Lower leg skin (tissue), 4 donors: ENCODE measurements at regions of chr4 and their contacts with region 1.

Region 1: GRCh38 chr4:165464813-165465381 is 86.1 kb downstream of the CPE start:
- DNase-seq: no peak
- H3K4me3 ChIP-seq: no peak overlapping the region
- CTCF ChIP-seq: peak in 2 of 3 donors; percentile 29 to 57
- POLR2A ChIP-seq: no peak

Region 2: DNA sequence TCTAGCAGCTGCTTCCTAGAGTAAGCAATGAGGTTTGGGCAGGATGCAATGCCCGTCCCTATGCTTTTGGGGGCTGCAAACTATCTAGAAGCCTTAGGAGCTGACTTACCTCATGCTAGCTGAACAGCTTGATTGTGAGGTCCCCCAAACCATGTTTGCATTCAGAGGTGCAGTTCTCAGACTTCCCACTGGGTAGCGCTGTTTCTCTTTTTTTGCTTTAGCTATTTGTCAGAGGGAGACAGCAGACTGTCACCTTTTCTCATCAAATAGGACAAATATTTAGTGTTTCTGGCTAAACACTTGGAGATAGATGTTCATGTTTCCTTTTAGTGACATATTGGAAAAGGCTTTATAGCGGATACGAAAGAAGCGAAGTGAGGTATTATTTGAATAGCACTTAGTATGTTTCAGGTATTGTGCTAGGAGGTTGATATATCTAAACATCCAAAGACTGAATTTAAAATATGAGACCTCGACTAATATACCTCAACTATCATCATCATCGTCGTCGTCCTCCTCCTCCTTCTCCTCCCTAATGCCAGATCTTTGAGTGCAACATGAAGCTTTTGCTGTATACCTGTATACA is 333.6 kb before region 1 on chr4:
- intact Hi-C with region 1: loop called (anchors 5 kb)
- DNase-seq: peak; percentile 69 to 94
- H3K4me3 ChIP-seq: no peak overlapping the region
- CTCF ChIP-seq: peak in 1 of 3 donors; percentile 83
- POLR2A ChIP-seq: no peak

Region 3: GRCh38 chr4:165541851-165542459 is 77.1 kb after region 1 on chr4:
- intact Hi-C with region 1: no loop called
- DNase-seq: no peak
- H3K4me3 ChIP-seq: no peak overlapping the region
- CTCF ChIP-seq: no peak
- POLR2A ChIP-seq: no peak